CD8-positive, alpha-beta T cell (primary cell): ENCODE measurements at regions of chr15 and their contacts with region 1.

Region 1: GRCh38 chr15:87317900-87318299 is 938.6 kb downstream of the NTRK3 start:
- DNase-seq: no peak
- ATAC-seq: no peak
- H3K4me3 ChIP-seq: no peak overlapping the region
- H3K4me3 Mint-ChIP-seq: no peak overlapping the region
- H3K27ac ChIP-seq: no peak overlapping the region
- H3K27ac Mint-ChIP-seq: no peak overlapping the region
- H3K4me1 ChIP-seq: no peaks in the 10 kb centered on the region
- H3K4me1 Mint-ChIP-seq: no peaks in the 10 kb centered on the region
- H3K27me3 ChIP-seq: peaks cover 0 to 1% of the 10 kb centered on the region in 2 experiments
- H3K27me3 Mint-ChIP-seq: no peaks in the 10 kb centered on the region
- CTCF ChIP-seq: no peak

Region 2: GRCh38 chr15:86915811-86916331 is 402.0 kb before region 1 on chr15:
- CTCF ChIA-PET with region 1: no interaction called
- POLR2A ChIA-PET with region 1: no interaction called
- intact Hi-C with region 1: no loop called
- DNase-seq: peak in 1 of 9 experiments; percentile 8
- ATAC-seq: no peak
- H3K4me3 ChIP-seq: no peak overlapping the region
- H3K4me3 Mint-ChIP-seq: no peak overlapping the region
- H3K27ac ChIP-seq: no peak overlapping the region
- H3K27ac Mint-ChIP-seq: no peak overlapping the region
- H3K4me1 ChIP-seq: no peaks in the 10 kb centered on the region
- H3K4me1 Mint-ChIP-seq: no peaks in the 10 kb centered on the region
- H3K27me3 ChIP-seq: no peaks in the 10 kb centered on the region
- H3K27me3 Mint-ChIP-seq: peaks cover 5% of the 10 kb centered on the region
- CTCF ChIP-seq: no peak

Region 3: GRCh38 chr15:87619161-87619960 is 301.5 kb after region 1 on chr15:
- CTCF ChIA-PET with region 1: no interaction called
- POLR2A ChIA-PET with region 1: no interaction called
- intact Hi-C with region 1: no loop called
- DNase-seq: no peak
- ATAC-seq: no peak
- H3K4me3 ChIP-seq: no peak overlapping the region
- H3K4me3 Mint-ChIP-seq: no peak overlapping the region
- H3K27ac ChIP-seq: no peak overlapping the region
- H3K27ac Mint-ChIP-seq: no peak overlapping the region
- H3K4me1 ChIP-seq: no peaks in the 10 kb centered on the region
- H3K4me1 Mint-ChIP-seq: no peaks in the 10 kb centered on the region
- H3K27me3 ChIP-seq: no peaks in the 10 kb centered on the region
- H3K27me3 Mint-ChIP-seq: no peaks in the 10 kb centered on the region
- CTCF ChIP-seq: no peak

Region 4: DNA sequence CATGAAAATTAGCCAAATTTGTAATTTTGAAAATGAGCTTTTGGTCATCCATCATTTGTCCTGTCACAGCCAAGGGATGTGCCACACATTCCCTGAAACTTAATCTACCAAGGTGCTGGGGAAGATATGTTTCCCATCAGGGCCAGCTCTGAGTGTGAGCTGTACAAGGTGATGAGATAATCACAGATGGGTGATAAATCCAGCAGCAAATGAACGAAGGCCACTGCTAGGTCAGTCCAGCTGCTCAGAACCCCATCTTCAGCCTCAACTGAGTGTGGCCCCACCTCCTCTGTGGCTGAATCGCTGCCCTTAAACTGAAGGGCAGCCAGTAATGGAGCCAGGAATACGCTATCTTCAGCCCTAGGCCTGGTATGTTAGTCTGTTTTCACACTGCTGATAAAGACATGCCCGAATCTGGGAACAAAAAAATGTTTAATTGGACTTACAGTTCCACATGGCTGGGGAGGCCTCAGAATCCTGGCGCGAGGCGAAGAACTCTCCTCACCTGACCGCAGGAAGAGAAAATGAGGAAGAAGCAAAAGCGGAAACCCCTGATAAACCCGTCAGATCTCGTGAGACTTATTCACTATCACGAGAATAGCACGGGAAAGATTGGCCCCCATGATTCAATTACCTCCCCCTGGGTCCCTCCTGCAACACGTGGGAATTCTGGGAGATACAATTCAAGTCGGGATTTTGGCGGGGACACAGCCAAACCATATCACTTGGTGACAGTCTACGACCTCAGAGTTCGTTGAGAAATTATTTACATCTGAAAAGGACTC is 385.6 kb after region 1 on chr15:
- CTCF ChIA-PET with region 1: no interaction called
- POLR2A ChIA-PET with region 1: no interaction called
- intact Hi-C with region 1: loop called in 1 of 2 experiments (anchors 5 kb)
- DNase-seq: no peak
- ATAC-seq: no peak
- H3K4me3 ChIP-seq: no peak overlapping the region
- H3K4me3 Mint-ChIP-seq: no peak overlapping the region
- H3K27ac ChIP-seq: no peak overlapping the region
- H3K27ac Mint-ChIP-seq: no peak overlapping the region
- H3K4me1 ChIP-seq: no peaks in the 10 kb centered on the region
- H3K4me1 Mint-ChIP-seq: no peaks in the 10 kb centered on the region
- H3K27me3 ChIP-seq: no peaks in the 10 kb centered on the region
- H3K27me3 Mint-ChIP-seq: no peaks in the 10 kb centered on the region
- CTCF ChIP-seq: no peak